ENCODE measurements at regions of chr2 and their contacts with region 1.

Region 1: GRCh38 chr2:64453770-64454385 is at the start of gene LGALSL:
- DNase-seq: peak; percentile 84 to 92 (median 92)
- ATAC-seq: peak; percentile 93 to 94
- H3K4me3 ChIP-seq: peak within 1 kb of the TSS; percentile 84
- H3K27ac ChIP-seq: peak within 1 kb of the TSS; percentile 98
- H3K4me1 ChIP-seq: peaks cover 7% of the 10 kb centered on the region
- H3K27me3 ChIP-seq: no peaks in the 10 kb centered on the region
- total RNA-seq, gene LGALSL: 11.5 to 19.1 (median 14.6) TPM

Region 2: DNA sequence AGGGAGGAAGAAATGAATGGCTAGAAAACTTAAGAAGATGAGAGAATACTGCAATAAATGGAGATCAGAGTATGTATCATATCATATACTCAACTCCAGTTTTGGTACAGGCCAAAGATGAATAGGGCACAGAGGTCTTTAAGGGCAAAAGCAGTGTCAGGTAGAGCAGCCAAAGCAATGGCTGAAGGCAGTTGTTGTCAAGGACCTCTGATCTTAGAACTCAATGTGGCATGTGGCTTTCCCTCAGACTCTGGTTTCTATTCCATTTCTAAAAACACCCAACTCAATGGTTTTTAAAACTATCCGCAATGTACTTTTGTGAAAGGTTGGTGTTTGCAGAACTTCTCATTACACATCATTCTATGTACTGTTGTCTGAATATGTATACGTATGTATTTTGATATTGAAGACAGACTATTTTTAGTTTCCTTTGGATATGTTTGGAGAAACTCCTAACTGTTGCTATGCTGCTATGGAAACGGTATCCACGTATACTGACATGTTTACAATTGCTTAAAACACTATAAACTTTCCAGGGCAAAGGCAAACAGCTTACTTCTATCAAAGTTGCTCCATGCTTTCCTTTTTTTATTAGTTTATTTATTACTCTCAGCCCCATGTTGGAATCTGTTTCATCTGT is 251.6 kb before region 1 on chr2:
- intact Hi-C with region 1: no loop called
- DNase-seq: no peak
- ATAC-seq: peak; percentile 24 to 70
- H3K4me3 ChIP-seq: no peak overlapping the region
- H3K27ac ChIP-seq: no peak overlapping the region
- H3K4me1 ChIP-seq: peaks cover 14% of the 10 kb centered on the region
- H3K27me3 ChIP-seq: no peaks in the 10 kb centered on the region

Region 3: DNA sequence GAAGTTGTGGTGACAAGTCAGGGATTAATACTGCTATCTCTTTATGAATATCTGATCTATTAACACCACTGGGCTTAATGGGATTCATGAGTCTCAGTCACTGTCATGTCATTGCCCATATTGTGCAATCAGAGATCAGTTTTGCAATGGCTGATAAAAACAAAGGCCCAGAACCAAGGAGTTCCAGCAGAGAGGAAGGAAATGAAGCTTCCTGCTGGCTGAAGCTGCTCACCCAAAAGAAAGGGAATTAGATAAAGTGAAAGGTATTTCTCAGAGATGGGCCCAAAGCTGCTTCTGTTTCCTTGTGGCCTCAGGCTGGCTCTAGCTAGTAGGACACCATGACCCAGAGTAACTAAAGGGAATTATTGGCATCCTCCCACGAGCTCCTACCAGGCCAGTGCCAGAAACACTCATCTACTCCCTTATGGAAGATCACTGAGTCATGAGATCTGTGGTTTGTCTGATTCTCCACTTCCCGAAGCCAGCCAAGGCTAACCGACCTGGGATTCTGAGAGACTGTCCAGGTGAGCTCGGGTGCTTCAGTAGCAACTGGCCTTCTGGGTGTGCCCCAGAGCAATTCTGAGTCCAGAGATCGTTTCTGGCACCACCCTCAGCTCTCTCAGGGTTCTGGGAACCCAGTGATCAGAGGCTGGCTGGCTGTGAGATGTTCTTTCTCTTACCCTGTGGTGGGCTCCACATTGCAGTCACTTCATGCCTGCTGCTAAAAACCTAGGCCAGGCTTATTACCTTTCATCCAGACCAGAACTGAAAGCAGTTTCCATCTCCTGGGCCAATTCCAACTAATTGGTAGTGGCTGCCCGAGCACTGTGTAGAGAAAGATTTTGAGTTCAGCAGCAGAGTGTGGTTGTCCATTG is 180.1 kb before region 1 on chr2:
- intact Hi-C with region 1: no loop called
- DNase-seq: peak in 2 of 3 donors; percentile 27 to 64
- ATAC-seq: peak; percentile 93 to 94
- H3K4me3 ChIP-seq: no peak overlapping the region
- H3K27ac ChIP-seq: peak overlapping the region; percentile 82
- H3K4me1 ChIP-seq: peaks cover 15% of the 10 kb centered on the region
- H3K27me3 ChIP-seq: no peaks in the 10 kb centered on the region

Region 4: GRCh38 chr2:64404002-64404731 is 49.7 kb before region 1 on chr2:
- intact Hi-C with region 1: loop called in 2 of 4 experiments (anchors 10 kb)
- DNase-seq: peak; percentile 92 to 95 (median 95)
- ATAC-seq: peak; percentile 95
- H3K4me3 ChIP-seq: no peak overlapping the region
- H3K27ac ChIP-seq: peak overlapping the region; percentile 98
- H3K4me1 ChIP-seq: peaks cover 24% of the 10 kb centered on the region
- H3K27me3 ChIP-seq: no peaks in the 10 kb centered on the region